CD8-positive, alpha-beta T cell (primary cell): ENCODE measurements at regions of chr13 and their contacts with region 1.

Region 1: GRCh38 chr13:53368948-53369347 is 340.3 kb downstream of the OLFM4 start:
- DNase-seq: no peak
- ATAC-seq: no peak
- H3K4me3 ChIP-seq: no peak overlapping the region
- H3K4me3 Mint-ChIP-seq: no peak overlapping the region
- H3K27ac ChIP-seq: no peak overlapping the region
- H3K27ac Mint-ChIP-seq: no peak overlapping the region
- H3K4me1 ChIP-seq: no peaks in the 10 kb centered on the region
- H3K4me1 Mint-ChIP-seq: no peaks in the 10 kb centered on the region
- H3K27me3 ChIP-seq: peaks cover 0 to 3% of the 10 kb centered on the region in 2 experiments
- H3K27me3 Mint-ChIP-seq: no peaks in the 10 kb centered on the region
- CTCF ChIP-seq: no peak

Region 2: DNA sequence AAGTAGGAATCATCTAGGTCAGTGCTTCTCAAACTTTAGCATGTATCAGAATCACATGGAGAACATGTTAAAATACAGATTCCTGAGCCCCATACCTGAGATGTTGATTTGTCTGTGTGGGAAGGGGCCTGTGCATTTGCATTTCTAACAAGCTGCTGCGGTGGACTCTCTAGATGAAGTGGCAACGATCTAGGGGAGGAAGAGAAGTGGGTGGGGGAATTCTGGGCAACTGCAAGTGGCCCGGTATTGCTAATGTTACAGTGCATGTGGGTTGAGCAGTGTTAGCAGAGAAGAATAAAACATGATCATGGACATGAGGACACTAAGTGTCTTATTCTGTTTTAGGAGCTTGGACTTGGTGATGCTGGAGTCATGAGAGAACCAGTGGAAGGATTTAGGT is 11.4 kb before region 1 on chr13:
- CTCF ChIA-PET with region 1: no interaction called
- POLR2A ChIA-PET with region 1: no interaction called
- intact Hi-C with region 1: loop called in 1 of 2 experiments (anchors 1 kb)
- DNase-seq: no peak
- ATAC-seq: no peak
- H3K4me3 ChIP-seq: no peak overlapping the region
- H3K4me3 Mint-ChIP-seq: no peak overlapping the region
- H3K27ac ChIP-seq: no peak overlapping the region
- H3K27ac Mint-ChIP-seq: no peak overlapping the region
- H3K4me1 ChIP-seq: no peaks in the 10 kb centered on the region
- H3K4me1 Mint-ChIP-seq: no peaks in the 10 kb centered on the region
- H3K27me3 ChIP-seq: no peaks in the 10 kb centered on the region
- H3K27me3 Mint-ChIP-seq: no peaks in the 10 kb centered on the region
- CTCF ChIP-seq: no peak